H1 (cell line): ENCODE measurements at regions of chr19 and their contacts with region 1.

Region 1: DNA sequence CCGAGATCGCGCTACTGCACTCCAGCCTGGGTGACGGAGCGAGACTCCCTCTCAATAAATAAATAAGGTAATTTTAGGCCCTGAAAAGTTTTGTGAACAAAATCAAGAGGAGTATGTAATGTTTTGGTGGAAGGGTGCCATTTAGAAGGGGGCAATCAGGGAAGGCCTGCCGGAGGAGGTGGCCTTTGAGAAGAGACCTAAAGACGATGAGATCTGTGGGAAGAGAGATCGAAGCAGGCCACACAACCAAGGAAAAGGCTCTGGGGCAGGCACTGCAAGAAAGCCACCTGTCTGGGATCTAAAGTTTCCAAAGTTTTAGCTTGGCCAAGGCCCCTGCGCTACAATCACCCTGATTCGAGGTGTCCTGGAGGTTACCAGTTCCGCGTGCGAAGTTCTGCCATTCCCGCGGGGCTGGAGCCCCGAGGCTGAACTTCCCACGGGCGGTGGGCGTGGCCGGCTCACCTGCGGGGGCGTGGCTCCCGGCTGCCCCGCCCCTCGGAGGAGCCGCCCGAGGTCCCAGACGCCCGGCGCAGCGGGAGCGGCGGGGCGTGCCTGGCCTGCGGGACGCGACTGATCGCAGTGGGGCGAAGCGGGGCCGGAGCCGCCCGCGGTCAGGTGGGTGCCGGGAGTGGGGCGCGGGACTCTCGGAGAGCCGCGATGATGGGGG is at the start of gene KLC3:
- DNase-seq: peak in 1 of 2 experiments; percentile 90
- H3K4me3 ChIP-seq: peak within 1 kb of the TSS; percentile 28 to 70 (median 36)
- H3K27ac ChIP-seq: no peak within 1 kb of the TSS
- H3K4me1 ChIP-seq: peaks cover 0 to 3% (median 0%) of the 10 kb centered on the region in 4 experiments; a peak in 4 of 7 replicates
- H3K27me3 ChIP-seq: peaks cover 4 to 16% (median 13%) of the 10 kb centered on the region in 4 experiments; a peak in 6 of 7 replicates
- CTCF ChIP-seq: no peak
- EP300 ChIP-seq: no peak
- POLR2A ChIP-seq: no peak
- RAD21 ChIP-seq: no peak
- total RNA-seq, gene KLC3: 2.8 and 3.2 TPM in 2 replicates

Region 2: GRCh38 chr19:45231891-45232290 is 108.5 kb before region 1 on chr19:
- CTCF ChIA-PET with region 1: no interaction called
- POLR2A ChIA-PET with region 1: no interaction called
- DNase-seq: no peak
- H3K4me3 ChIP-seq: no peak overlapping the region
- H3K27ac ChIP-seq: no peak overlapping the region
- H3K4me1 ChIP-seq: peaks cover 0 to 8% (median 5%) of the 10 kb centered on the region in 4 experiments; a peak in 4 of 7 replicates
- H3K27me3 ChIP-seq: peaks cover 26 to 43% (median 40%) of the 10 kb centered on the region in 4 experiments
- CTCF ChIP-seq: no peak
- EP300 ChIP-seq: no peak
- POLR2A ChIP-seq: no peak
- RAD21 ChIP-seq: no peak

Region 3: DNA sequence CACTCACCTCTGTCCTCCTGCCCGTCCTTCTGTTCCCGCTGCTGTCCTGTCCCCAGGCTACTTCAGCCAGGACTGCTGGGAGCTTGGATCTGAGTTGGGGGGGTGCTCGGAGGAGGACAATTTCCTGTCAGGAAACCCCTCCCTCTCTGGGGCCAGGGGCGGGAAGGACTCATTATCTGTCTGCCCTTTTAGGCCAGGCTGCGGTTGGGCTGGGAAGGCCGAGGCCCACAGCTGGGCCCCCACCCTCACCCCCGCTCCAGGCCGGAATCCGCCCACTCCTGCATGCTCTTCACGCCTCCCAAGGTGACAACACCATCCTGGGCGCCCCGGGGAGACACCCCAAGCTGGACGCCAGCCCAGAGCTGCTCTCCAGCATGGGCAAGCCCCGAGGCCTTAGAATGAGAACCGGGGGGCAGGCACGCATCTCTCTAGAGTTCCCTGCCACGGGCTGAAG is 95.0 kb before region 1 on chr19 and contains the start of gene EXOC3L2:
- CTCF ChIA-PET with region 1: interaction called, 23 read pairs
- POLR2A ChIA-PET with region 1: no interaction called
- DNase-seq: no peak
- H3K4me3 ChIP-seq: no peak within 1 kb of the TSS
- H3K27ac ChIP-seq: no peak within 1 kb of the TSS
- H3K4me1 ChIP-seq: peaks cover 0 to 3% (median 1%) of the 10 kb centered on the region in 4 experiments; a peak in 3 of 7 replicates
- H3K27me3 ChIP-seq: peaks cover 0 to 8% (median 7%) of the 10 kb centered on the region in 4 experiments; a peak in 5 of 7 replicates
- CTCF ChIP-seq: no peak
- EP300 ChIP-seq: no peak
- POLR2A ChIP-seq: no peak
- RAD21 ChIP-seq: no peak
- total RNA-seq, gene EXOC3L2: 1.5 and 1.6 TPM in 2 replicates

Region 4: DNA sequence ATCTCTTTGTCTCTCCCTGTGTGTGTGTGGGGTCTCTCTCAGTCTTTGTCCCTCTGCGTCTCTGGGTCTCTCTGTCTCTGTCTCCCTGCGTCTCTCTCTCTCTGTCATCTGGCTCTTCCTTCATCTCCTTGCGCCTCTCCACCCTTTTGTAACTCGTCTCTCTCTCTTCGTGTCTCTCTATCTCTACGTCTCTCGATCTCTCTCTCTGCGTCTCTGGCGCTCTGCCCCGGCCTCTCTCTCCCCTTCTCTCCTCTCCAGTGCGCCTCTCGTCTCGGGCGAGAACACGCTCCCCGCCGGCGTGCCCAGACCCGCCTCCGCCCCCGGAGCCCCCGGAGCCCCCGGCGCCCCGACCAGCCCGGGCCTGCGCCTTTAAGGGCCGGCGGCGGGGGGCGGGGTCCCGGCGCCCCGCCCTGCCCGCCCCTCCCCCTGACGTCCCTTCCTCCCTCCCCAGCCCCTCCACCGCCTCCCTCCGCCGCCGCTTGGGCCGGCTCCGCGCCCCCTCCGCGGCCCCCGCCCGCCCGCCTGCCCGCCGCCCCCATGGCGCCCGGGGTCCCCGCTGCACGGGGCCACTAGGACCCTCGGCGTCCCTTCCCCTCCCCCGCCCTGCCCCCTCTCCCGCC is 89.4 kb before region 1 on chr19 and contains the start of gene MARK4:
- CTCF ChIA-PET with region 1: interaction called, 23 read pairs
- POLR2A ChIA-PET with region 1: no interaction called
- DNase-seq: peak in 1 of 2 experiments; percentile 83
- H3K4me3 ChIP-seq: peak within 1 kb of the TSS; percentile 60 to 86 (median 66)
- H3K27ac ChIP-seq: no peak within 1 kb of the TSS
- H3K4me1 ChIP-seq: peaks cover 0 to 10% (median 0%) of the 10 kb centered on the region in 4 experiments; a peak in 2 of 7 replicates
- H3K27me3 ChIP-seq: peaks cover 0 to 10% (median 9%) of the 10 kb centered on the region in 4 experiments; a peak in 5 of 7 replicates
- CTCF ChIP-seq: no peak
- EP300 ChIP-seq: no peak
- POLR2A ChIP-seq: no peak
- RAD21 ChIP-seq: no peak
- total RNA-seq, gene MARK4: 46.8 and 49.8 TPM in 2 replicates

Region 5: DNA sequence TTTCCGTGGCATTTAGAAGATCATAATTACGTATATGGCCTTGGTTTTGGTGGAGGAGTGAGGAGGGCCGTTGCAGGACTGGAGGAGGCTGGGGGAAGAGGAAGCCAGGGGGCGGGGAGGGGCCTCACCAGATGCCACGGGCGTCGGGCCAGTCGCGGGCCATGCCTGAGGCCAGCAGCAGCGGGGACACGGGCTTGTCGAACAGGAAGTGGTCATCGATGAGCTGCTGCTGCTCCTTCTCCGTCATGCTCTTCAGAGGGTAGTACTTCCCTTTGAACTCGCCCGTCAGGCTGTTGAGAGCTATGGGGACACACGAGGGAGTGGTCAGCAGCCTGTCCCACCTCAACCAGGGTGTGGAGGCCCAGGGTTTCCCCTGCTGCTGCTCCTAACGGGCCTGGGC is 28.7 kb before region 1 on chr19:
- CTCF ChIA-PET with region 1: interaction called, 10 read pairs
- POLR2A ChIA-PET with region 1: no interaction called
- DNase-seq: no peak
- H3K4me3 ChIP-seq: no peak overlapping the region
- H3K27ac ChIP-seq: no peak overlapping the region
- H3K4me1 ChIP-seq: no peaks in the 10 kb centered on the region; a peak in 1 of 7 replicates
- H3K27me3 ChIP-seq: peaks cover 0 to 17% (median 4%) of the 10 kb centered on the region in 4 experiments; a peak in 5 of 7 replicates
- CTCF ChIP-seq: no peak
- EP300 ChIP-seq: no peak
- POLR2A ChIP-seq: no peak
- RAD21 ChIP-seq: no peak

Region 6: DNA sequence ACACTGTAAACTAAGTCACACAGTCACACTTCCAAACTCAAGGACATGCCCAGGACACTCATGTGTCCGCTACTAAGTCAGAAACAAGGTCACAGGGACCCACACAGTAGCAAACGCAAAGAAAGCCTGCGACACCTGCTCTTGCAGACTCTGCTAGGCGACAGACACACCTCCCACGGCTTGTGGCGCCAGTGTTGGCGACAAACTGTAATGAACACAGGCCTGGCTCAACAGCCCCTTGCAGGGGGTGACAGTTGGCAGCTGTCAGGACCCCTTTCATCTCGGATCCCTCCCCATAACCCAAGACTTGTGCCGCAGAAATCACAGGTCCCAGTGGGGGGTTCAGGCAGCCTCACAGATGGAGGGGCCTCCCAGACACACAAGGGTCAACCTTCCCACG is 18.1 kb before region 1 on chr19:
- CTCF ChIA-PET with region 1: interaction called, 13 read pairs
- POLR2A ChIA-PET with region 1: interaction called, 4 read pairs
- DNase-seq: no peak
- H3K4me3 ChIP-seq: no peak overlapping the region
- H3K27ac ChIP-seq: no peak overlapping the region
- H3K4me1 ChIP-seq: peaks cover 2 to 18% (median 6%) of the 10 kb centered on the region in 4 experiments; a peak in 6 of 7 replicates
- H3K27me3 ChIP-seq: peaks cover 0 to 14% (median 13%) of the 10 kb centered on the region in 4 experiments; a peak in 5 of 7 replicates
- CTCF ChIP-seq: no peak
- EP300 ChIP-seq: no peak
- POLR2A ChIP-seq: no peak
- RAD21 ChIP-seq: no peak